ENCODE measurements at regions of chr10 and their contacts with region 1.

Region 1: GRCh38 chr10:71835671-71836595 is 15.1 kb downstream of the PSAP start:
- DNase-seq: no peak
- ATAC-seq: no peak
- H3K4me3 ChIP-seq: no peak overlapping the region
- H3K27ac ChIP-seq: peak overlapping the region in 1 of 2 experiments; percentile 41; a peak in 3 of 6 replicates
- H3K4me1 ChIP-seq: peaks cover 75% of the 10 kb centered on the region
- CTCF ChIP-seq: no peak
- EP300 ChIP-seq: no peak
- POLR2A ChIP-seq: no peak
- RAD21 ChIP-seq: no peak

Region 2: GRCh38 chr10:71765251-71765890 is 70.6 kb before region 1 on chr10:
- CTCF ChIA-PET with region 1: no interaction called
- POLR2A ChIA-PET with region 1: no interaction called
- DNase-seq: peak in 1 of 2 experiments; percentile 24
- ATAC-seq: no peak
- H3K4me3 ChIP-seq: no peak overlapping the region
- H3K27ac ChIP-seq: peak overlapping the region; percentile 98 to 99
- H3K4me1 ChIP-seq: peaks cover 83% of the 10 kb centered on the region
- CTCF ChIP-seq: no peak
- EP300 ChIP-seq: no peak
- POLR2A ChIP-seq: no peak
- RAD21 ChIP-seq: no peak

Region 3: GRCh38 chr10:71822448-71822763 is 13.5 kb before region 1 on chr10:
- CTCF ChIA-PET with region 1: interaction called, 71 read pairs
- POLR2A ChIA-PET with region 1: no interaction called
- DNase-seq: no peak
- ATAC-seq: no peak
- H3K4me3 ChIP-seq: no peak overlapping the region
- H3K27ac ChIP-seq: no peak overlapping the region
- H3K4me1 ChIP-seq: no peaks in the 10 kb centered on the region
- CTCF ChIP-seq: no peak
- EP300 ChIP-seq: no peak
- POLR2A ChIP-seq: no peak
- RAD21 ChIP-seq: no peak

Region 4: DNA sequence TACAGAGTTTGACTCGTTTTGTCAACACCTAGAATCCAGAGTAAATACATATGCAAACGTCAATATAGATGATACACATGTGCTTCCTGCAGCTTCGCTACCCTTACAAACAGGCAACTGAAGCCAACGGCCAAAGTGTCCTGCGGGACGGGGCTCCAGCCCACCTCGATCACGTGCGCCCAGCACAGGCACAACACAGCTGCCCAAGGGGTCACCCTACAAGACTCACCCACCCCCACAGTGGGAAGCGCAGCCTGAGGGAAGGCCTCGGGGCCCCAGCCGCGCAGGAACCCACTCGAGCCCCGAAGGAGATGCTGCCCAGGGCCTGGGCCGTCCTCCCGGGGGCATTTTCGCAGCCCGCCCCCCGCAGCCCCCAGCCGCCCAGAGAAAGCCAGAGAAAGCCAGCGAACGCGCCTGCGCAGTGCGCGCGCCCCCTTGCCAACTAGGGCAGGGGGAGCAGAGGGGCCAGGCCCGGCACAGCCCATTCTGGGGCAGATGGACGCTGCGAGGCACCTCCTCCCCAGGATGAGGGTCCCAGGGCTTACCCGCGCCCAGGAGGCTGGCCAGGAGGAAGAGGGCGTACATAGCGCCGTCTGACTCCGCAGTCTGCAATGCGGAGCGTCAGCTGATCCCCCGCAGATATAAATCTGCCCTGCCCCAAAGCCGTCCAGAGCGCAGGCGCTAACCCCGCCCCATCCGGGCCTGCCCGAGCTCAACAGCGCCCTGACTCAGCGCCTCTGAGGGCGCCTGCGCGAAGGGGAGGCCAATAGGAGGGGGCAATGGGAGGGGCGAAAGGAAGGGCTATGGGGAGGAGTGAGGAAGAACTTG is 14.9 kb after region 1 on chr10 and contains the start of gene PSAP:
- CTCF ChIA-PET with region 1: interaction called, 7 read pairs
- POLR2A ChIA-PET with region 1: interaction called, 33 read pairs
- DNase-seq: peak; percentile 97
- ATAC-seq: peak; percentile 95 to 98
- H3K4me3 ChIP-seq: peak within 1 kb of the TSS; percentile 76
- H3K27ac ChIP-seq: peak within 1 kb of the TSS; percentile 92 to 97
- H3K4me1 ChIP-seq: peaks cover 34% of the 10 kb centered on the region
- CTCF ChIP-seq: no peak
- EP300 ChIP-seq: no peak
- POLR2A ChIP-seq: peak; percentile 96
- RAD21 ChIP-seq: no peak; a peak in 1 of 5 replicates
- polyA plus RNA-seq, gene PSAP: 1,519 and 1,660 TPM in 2 replicates

Region 5: DNA sequence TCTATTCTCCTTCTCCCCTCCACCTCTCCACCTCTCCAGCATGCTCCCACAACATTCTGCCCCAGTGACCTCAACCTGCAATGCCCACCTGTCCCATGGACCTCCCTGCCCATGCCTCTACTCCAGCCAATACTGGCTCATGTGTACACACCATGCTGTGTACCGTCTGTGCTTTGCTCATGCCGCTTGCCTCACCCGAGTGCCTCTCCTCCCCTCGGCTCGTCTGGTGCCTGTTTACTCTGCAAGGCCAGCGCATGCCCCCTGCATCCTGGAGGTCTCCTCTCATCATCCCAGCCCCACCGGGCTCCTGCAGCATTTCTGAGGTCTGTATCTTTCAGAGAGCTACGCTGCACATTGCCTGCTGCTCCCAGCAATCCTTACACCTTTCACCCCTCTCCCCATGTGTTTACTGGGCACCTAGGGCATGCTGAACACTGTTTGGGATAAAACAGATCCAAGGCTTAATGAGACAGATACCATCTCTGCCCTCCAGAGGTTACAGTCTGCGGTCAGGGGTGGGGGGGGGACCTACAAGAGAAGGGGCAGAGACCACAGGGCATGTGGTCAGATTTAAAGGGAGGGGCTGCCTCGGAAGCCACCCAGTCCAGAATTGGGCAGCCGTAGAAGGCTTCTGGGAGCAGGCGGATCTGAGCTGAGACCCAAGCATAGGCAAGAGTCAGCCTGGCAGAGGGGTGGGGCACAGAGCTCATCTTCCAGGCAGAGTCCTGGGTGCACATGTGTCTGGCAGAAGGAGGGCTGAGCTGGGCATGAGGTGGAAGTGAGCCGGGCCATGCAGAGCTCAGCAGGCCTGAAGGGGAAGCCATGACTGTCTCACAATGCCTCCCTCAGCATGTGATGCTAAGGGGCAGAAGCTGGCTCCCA is 44.7 kb after region 1 on chr10:
- CTCF ChIA-PET with region 1: interaction called, 12 read pairs
- POLR2A ChIA-PET with region 1: no interaction called
- DNase-seq: peak in 1 of 2 experiments; percentile 28
- ATAC-seq: peak; percentile 68 to 73; a peak in 5 of 6 replicates
- H3K4me3 ChIP-seq: no peak overlapping the region
- H3K27ac ChIP-seq: peak overlapping the region; percentile 52 to 81
- H3K4me1 ChIP-seq: peaks cover 31% of the 10 kb centered on the region
- CTCF ChIP-seq: no peak
- EP300 ChIP-seq: no peak
- POLR2A ChIP-seq: no peak
- RAD21 ChIP-seq: no peak